ENCODE measurements at regions of chr1 and their contacts with region 1.

Region 1: GRCh38 chr1:167687919-167688519 is 33.8 kb upstream of the MPZL1 start:
- DNase-seq: peak in 4 of 6 donors; percentile 44 to 78 (median 52)
- ATAC-seq: peak; percentile 70 to 92 (median 84)
- H3K4me3 ChIP-seq: no peak overlapping the region
- H3K27ac ChIP-seq: no peak overlapping the region
- H3K4me1 ChIP-seq: no peaks in the 10 kb centered on the region
- H3K27me3 ChIP-seq: no peaks in the 10 kb centered on the region
- CTCF ChIP-seq: peak; percentile 78 to 89 (median 81)

Region 2: DNA sequence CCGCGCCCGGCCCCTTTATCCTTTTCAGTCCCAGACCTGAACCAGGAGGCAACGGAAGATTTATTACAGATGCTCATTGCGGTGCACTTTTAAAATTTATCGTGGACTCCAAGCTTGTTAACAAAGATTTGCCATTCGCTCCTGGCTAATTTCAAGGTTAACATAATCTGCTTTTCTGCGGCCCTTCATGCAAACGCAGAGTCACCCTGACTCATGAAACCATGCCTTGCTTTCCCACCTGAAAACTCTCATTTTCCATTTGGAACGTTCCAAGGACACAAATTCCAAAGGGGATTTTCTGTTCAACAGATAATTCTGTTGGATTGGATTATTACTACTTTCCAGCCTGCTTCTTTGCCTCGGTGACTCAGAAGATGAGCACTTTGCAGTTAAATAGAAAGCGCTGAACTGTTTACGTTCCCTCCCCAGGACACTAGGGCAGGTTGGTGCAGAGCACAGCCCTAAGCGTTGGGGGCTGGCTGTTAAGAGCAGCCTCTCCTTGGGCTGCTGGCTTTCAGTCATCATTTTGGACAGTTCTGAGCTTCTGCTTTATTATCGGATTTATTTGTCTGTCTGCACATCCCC is 220.8 kb before region 1 on chr1:
- intact Hi-C with region 1: no loop called
- DNase-seq: no peak
- ATAC-seq: no peak
- H3K4me3 ChIP-seq: no peak overlapping the region
- H3K27ac ChIP-seq: no peak overlapping the region
- H3K4me1 ChIP-seq: no peaks in the 10 kb centered on the region
- H3K27me3 ChIP-seq: no peaks in the 10 kb centered on the region
- CTCF ChIP-seq: no peak

Region 3: DNA sequence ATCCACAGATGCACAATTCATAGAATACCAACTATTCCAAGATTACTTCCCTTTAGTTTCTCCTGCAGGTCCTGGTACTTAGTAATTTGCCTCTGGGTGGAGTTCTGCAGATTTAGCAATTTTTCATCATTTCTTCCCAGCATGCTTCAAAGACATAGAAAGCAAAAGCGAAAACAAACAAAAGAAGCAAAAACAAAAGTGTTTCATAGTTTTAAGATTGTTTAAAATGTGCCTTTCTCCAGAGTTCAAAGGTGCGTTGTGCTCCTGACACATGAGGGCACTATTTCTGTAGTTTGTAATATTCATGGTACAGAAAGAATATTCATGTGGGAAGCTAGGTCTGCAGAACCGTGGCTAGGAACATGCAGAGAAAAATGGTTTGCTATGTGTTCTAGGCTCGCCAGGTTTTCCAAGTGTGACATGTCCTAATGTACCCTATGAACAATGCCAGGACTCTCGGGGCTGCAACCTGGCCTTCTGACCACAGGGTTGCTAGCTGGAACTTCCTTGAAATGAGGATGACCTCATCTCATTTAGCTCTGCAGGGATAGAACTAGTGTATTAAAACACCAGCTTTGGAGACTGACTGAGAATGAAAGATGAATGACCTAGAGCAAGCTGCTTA is 88.0 kb before region 1 on chr1:
- intact Hi-C with region 1: loop called in 2 of 3 experiments (anchors 10 kb)
- DNase-seq: peak in 1 of 6 donors; percentile 16
- ATAC-seq: peak in 3 of 4 donors; percentile 64 to 85 (median 85)
- H3K4me3 ChIP-seq: no peak overlapping the region
- H3K27ac ChIP-seq: no peak overlapping the region
- H3K4me1 ChIP-seq: peaks cover 0 to 6% (median 0%) of the 10 kb centered on the region in 3 donors
- H3K27me3 ChIP-seq: peaks cover 0 to 4% (median 0%) of the 10 kb centered on the region in 4 donors
- CTCF ChIP-seq: no peak